Heart right ventricle (tissue), 16 donors: ENCODE measurements at regions of chr11 and their contacts with region 1.

Region 1: DNA sequence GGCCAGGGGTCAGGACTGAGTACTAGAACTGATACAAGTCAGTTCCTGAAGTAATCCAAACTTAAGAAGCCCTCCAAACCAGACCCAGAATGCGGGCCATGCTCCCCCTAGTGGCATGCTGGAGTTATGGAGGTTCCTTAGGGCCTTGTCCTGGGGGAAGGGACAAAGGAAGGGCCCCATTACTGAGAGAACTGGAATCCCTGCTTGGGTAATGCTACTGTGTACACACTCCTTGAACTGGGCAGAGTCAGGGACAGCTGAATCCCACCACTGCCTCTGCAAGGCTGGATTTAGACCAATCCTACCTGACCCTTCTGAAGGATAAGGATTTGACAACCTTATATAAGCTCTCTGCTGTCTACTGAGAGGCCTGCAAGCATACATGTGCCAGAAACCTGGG is 97.3 kb upstream of the AKIP1 start:
- DNase-seq: peak; percentile 75 to 81
- ATAC-seq: peak; percentile 35 to 61 (median 48)
- H3K4me3 ChIP-seq: no peak overlapping the region
- H3K27ac ChIP-seq: peak overlapping the region in 8 of 10 donors; percentile 31 to 63 (median 43)
- H3K4me1 ChIP-seq: peaks cover 6 to 65% (median 31%) of the 10 kb centered on the region in 9 donors
- H3K27me3 ChIP-seq: no peaks in the 10 kb centered on the region
- CTCF ChIP-seq: peak; percentile 63 to 94 (median 88)

Region 2: GRCh38 chr11:8604078-8604723 is 209.5 kb before region 1 on chr11:
- intact Hi-C with region 1: loop called in 2 of 10 experiments (anchors 10 kb)
- DNase-seq: peak in 1 of 2 donors; percentile 46
- ATAC-seq: peak in 6 of 8 donors; percentile 44 to 91 (median 50)
- H3K4me3 ChIP-seq: no peak overlapping the region
- H3K27ac ChIP-seq: peak overlapping the region in 1 of 10 donors; percentile 10
- H3K4me1 ChIP-seq: peaks cover 0 to 12% (median 0%) of the 10 kb centered on the region in 9 donors
- H3K27me3 ChIP-seq: peaks cover 0 to 4% (median 0%) of the 10 kb centered on the region in 7 donors
- CTCF ChIP-seq: peak; percentile 32 to 75 (median 63)

Region 3: GRCh38 chr11:8624698-8625097 is 189.0 kb before region 1 on chr11:
- intact Hi-C with region 1: no loop called
- DNase-seq: peak in 1 of 2 donors; percentile 8
- ATAC-seq: peak in 6 of 8 donors; percentile 44 to 90 (median 68)
- H3K4me3 ChIP-seq: no peak overlapping the region
- H3K27ac ChIP-seq: no peak overlapping the region
- H3K4me1 ChIP-seq: peaks cover 0 to 12% (median 0%) of the 10 kb centered on the region in 9 donors
- H3K27me3 ChIP-seq: no peaks in the 10 kb centered on the region
- CTCF ChIP-seq: no peak

Region 4: DNA sequence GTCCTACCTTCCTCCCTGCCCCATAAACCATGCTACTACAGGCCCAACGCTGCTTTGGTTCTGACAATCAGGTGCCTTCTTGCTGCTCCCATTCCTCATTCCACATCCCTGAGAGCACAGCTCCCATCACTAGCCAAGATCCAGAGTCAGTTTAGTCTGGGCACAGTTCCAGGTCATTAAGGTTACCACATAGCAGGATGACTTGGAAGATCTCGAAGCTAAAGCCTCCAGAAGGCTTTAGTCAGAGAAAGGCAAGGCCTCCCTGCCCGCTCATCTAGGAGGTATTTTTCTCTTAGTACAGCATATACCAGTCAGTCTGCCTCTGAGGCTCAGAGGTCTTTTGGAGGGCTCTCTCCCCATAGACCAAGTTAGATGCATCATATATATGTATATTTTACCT is 161.5 kb before region 1 on chr11:
- intact Hi-C with region 1: no loop called
- DNase-seq: no peak
- ATAC-seq: peak in 1 of 8 donors; percentile 72
- H3K4me3 ChIP-seq: no peak overlapping the region
- H3K27ac ChIP-seq: no peak overlapping the region
- H3K4me1 ChIP-seq: peaks cover 0 to 3% (median 0%) of the 10 kb centered on the region in 9 donors
- H3K27me3 ChIP-seq: no peaks in the 10 kb centered on the region
- CTCF ChIP-seq: no peak

Region 5: GRCh38 chr11:8688414-8689362 is 125.0 kb before region 1 on chr11:
- intact Hi-C with region 1: loop called (anchors 2 to 10 kb)
- DNase-seq: peak; percentile 95
- ATAC-seq: peak; percentile 96 to 99 (median 98)
- H3K4me3 ChIP-seq: peak overlapping the region; percentile 15 to 74 (median 62)
- H3K27ac ChIP-seq: peak overlapping the region; percentile 72 to 90 (median 84)
- H3K4me1 ChIP-seq: peaks cover 9 to 48% (median 30%) of the 10 kb centered on the region in 9 donors
- H3K27me3 ChIP-seq: no peaks in the 10 kb centered on the region
- CTCF ChIP-seq: peak in 4 of 9 donors; percentile 25 to 60 (median 48)

Region 6: GRCh38 chr11:8709002-8709672 is 104.5 kb before region 1 on chr11:
- intact Hi-C with region 1: loop called in 2 of 10 experiments (anchors 5 kb)
- DNase-seq: peak; percentile 80 to 91
- ATAC-seq: peak; percentile 57 to 77 (median 74)
- H3K4me3 ChIP-seq: no peak overlapping the region
- H3K27ac ChIP-seq: peak overlapping the region; percentile 27 to 89 (median 84)
- H3K4me1 ChIP-seq: peaks cover 26 to 50% (median 45%) of the 10 kb centered on the region in 9 donors
- H3K27me3 ChIP-seq: no peaks in the 10 kb centered on the region
- CTCF ChIP-seq: no peak

Region 7: GRCh38 chr11:8732748-8733241 is 80.9 kb before region 1 on chr11:
- intact Hi-C with region 1: loop called in 1 of 10 experiments (anchors 5 kb)
- DNase-seq: peak; percentile 73 to 75
- ATAC-seq: peak; percentile 87 to 95 (median 90)
- H3K4me3 ChIP-seq: no peak overlapping the region
- H3K27ac ChIP-seq: peak overlapping the region; percentile 7 to 84 (median 78)
- H3K4me1 ChIP-seq: peaks cover 15 to 77% (median 46%) of the 10 kb centered on the region in 9 donors
- H3K27me3 ChIP-seq: no peaks in the 10 kb centered on the region
- CTCF ChIP-seq: no peak

Region 8: DNA sequence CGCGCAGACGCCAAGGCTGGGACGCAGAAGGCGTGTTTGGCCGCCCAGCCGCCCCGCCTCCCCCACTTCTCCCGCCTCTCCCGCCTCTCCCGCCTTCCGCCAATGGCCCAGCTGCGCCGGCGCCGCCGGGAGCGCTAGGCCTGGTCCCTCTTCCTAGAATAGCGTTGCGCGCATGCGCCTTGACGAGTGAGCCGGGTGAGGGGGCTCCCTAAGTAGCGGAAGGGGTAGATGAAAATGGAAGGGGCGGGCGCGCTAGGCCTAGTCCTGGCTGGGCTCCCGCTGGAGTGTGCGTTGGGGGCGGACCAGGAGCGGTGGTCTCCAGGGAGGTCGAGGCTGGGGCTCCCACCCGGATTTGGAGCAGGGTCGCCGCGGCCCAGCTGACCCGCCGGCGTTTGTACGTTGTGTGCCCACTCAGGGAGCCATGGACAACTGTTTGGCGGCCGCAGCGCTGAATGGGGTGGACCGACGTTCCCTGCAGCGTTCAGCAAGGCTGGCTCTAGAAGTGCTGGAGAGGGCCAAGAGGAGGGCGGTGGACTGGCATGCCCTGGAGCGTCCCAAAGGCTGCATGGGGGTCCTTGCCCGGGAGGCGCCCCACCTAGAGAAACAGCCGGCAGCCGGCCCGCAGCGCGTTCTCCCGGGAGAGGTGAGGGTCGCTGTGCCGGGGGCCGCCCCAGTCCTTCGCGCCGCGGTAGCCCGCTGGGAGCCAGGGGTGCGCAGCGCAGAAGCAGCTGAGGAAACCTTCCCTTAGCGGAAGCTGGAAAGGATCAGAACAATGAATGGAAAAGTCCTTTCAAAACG is 97.6 kb after region 1 on chr11 and contains the start of gene AKIP1:
- intact Hi-C with region 1: loop called in 1 of 10 experiments (anchors 5 kb)
- DNase-seq: peak; percentile 96 to 98
- ATAC-seq: peak; percentile 96 to 99 (median 97)
- H3K4me3 ChIP-seq: peak within 1 kb of the TSS; percentile 59 to 98 (median 81)
- H3K27ac ChIP-seq: peak within 1 kb of the TSS; percentile 78 to 99 (median 94)
- H3K4me1 ChIP-seq: peaks cover 0 to 63% (median 30%) of the 10 kb centered on the region in 9 donors
- H3K27me3 ChIP-seq: no peaks in the 10 kb centered on the region
- CTCF ChIP-seq: peak in 1 of 9 donors; percentile 7
- total RNA-seq, gene AKIP1: 21.6 to 29.3 (median 25.5) TPM

Region 9: GRCh38 chr11:9078113-9079086 is 264.7 kb after region 1 on chr11:
- intact Hi-C with region 1: no loop called
- DNase-seq: no peak
- ATAC-seq: no peak
- H3K4me3 ChIP-seq: no peak overlapping the region
- H3K27ac ChIP-seq: no peak overlapping the region
- H3K4me1 ChIP-seq: peaks cover 0 to 6% (median 0%) of the 10 kb centered on the region in 9 donors
- H3K27me3 ChIP-seq: no peaks in the 10 kb centered on the region
- CTCF ChIP-seq: no peak

Region 10: GRCh38 chr11:9314291-9315036 is 500.8 kb after region 1 on chr11 and contains the start of gene TMEM41B:
- intact Hi-C with region 1: no loop called
- DNase-seq: peak; percentile 98 to 99
- ATAC-seq: peak; percentile 99 to 100 (median 100)
- H3K4me3 ChIP-seq: peak within 1 kb of the TSS; percentile 71 to 98 (median 88)
- H3K27ac ChIP-seq: peak within 1 kb of the TSS; percentile 49 to 94 (median 86)
- H3K4me1 ChIP-seq: peaks cover 0 to 29% (median 15%) of the 10 kb centered on the region in 9 donors
- H3K27me3 ChIP-seq: peaks cover 0 to 6% (median 0%) of the 10 kb centered on the region in 7 donors
- CTCF ChIP-seq: peak in 6 of 9 donors; percentile 10 to 43 (median 24)
- total RNA-seq, gene TMEM41B: 17.2 to 25.1 (median 20.8) TPM